Heart right ventricle (tissue), 16 donors: ENCODE measurements at regions of chr2 and their contacts with region 1.

Region 1: GRCh38 chr2:241355983-241356870 is at the start of gene FARP2:
- DNase-seq: peak; percentile 99 to 100
- ATAC-seq: peak; percentile 92 to 97 (median 94)
- H3K4me3 ChIP-seq: peak within 1 kb of the TSS; percentile 73 to 95 (median 86)
- H3K27ac ChIP-seq: peak within 1 kb of the TSS; percentile 67 to 92 (median 90)
- H3K4me1 ChIP-seq: peaks cover 2 to 38% (median 20%) of the 10 kb centered on the region in 9 donors
- H3K27me3 ChIP-seq: no peaks in the 10 kb centered on the region
- CTCF ChIP-seq: peak in 3 of 9 donors; percentile 4 to 20 (median 18)
- total RNA-seq, gene FARP2: 14.4 to 23.6 (median 19.4) TPM

Region 2: DNA sequence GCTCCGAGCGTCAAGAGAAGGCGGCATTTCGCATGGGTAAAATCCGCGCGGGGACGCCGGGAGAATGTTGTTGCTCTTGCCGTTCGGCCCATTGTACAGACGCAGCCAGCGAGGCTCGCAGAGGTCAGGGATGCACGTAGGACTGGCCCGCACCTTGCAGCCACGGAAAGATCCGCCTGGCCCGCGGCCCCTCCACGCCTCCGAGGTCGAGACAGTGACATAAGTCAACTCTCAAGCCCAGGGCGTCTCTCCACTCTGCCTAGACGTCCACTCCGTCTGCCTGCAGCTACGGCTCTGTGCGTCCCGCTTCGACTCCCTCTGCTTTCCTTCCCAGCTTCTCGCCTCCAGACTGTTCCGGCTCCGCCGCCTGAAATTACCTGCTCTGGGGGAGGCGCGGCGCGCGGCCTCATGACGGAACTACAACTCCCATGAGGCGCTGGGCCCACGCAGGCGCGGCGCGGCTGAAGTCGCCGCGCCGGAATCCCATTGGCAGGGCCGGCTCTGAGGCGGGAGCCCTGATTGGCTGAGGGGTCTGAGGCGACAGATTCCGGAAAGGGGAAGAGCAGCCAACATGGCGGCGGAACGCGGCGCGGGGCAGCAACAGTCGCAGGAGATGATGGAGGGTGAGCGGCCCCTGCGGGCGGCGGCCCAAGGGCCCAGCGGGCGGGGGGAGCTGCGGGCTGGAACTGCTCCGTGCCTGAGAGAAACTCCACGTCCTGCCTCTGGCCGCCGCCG is 206.1 kb before region 1 on chr2 and contains the start of gene PPP1R7:
- intact Hi-C with region 1: no loop called
- DNase-seq: peak; percentile 94 to 95
- ATAC-seq: peak; percentile 96 to 99 (median 98)
- H3K4me3 ChIP-seq: peak within 1 kb of the TSS; percentile 63 to 100 (median 95)
- H3K27ac ChIP-seq: peak within 1 kb of the TSS in 9 of 10 donors; percentile 70 to 94 (median 89)
- H3K4me1 ChIP-seq: peaks cover 2 to 24% (median 20%) of the 10 kb centered on the region in 9 donors
- H3K27me3 ChIP-seq: no peaks in the 10 kb centered on the region
- CTCF ChIP-seq: peak in 4 of 9 donors; percentile 24 to 39 (median 34)
- total RNA-seq, gene PPP1R7: 64.1 to 91.3 (median 78.3) TPM

Region 3: DNA sequence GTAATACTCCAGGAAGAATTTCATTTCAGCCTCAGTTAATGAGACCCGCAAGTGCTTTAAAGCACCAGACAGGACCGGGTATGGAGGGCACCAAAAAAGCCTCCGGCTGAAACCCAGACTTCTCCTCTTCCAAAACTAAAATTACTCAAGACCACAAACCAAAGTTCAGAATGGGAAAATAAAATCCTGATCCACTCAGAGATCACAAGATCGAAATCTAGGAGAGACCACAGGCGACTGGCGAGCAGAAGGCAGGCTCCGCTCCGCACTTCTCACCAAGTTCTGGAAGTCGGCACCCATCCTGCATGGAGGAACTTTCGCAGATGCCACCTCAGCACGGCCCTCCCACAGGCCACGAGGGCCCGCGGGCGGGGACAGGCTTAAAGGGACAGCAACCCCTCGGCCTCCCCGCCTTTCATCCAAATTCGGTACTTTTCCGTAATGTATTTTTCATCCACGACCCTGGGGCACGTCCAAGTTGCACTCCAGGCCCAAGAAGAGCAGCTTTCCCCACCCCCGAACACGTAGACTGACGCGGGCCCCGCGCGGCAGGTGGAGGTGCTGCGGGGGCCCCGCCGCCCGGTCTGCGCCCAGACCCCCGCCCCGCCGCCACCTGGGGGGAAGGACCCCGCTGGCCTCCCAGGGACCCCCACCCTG is 84.5 kb before region 1 on chr2:
- intact Hi-C with region 1: loop called in 1 of 10 experiments (anchors 5 kb)
- DNase-seq: peak; percentile 79 to 85
- ATAC-seq: peak; percentile 83 to 93 (median 90)
- H3K4me3 ChIP-seq: peak overlapping the region; percentile 81 to 96 (median 91)
- H3K27ac ChIP-seq: peak overlapping the region; percentile 63 to 96 (median 93)
- H3K4me1 ChIP-seq: peaks cover 6 to 48% (median 39%) of the 10 kb centered on the region in 9 donors
- H3K27me3 ChIP-seq: no peaks in the 10 kb centered on the region
- CTCF ChIP-seq: no peak

Region 4: DNA sequence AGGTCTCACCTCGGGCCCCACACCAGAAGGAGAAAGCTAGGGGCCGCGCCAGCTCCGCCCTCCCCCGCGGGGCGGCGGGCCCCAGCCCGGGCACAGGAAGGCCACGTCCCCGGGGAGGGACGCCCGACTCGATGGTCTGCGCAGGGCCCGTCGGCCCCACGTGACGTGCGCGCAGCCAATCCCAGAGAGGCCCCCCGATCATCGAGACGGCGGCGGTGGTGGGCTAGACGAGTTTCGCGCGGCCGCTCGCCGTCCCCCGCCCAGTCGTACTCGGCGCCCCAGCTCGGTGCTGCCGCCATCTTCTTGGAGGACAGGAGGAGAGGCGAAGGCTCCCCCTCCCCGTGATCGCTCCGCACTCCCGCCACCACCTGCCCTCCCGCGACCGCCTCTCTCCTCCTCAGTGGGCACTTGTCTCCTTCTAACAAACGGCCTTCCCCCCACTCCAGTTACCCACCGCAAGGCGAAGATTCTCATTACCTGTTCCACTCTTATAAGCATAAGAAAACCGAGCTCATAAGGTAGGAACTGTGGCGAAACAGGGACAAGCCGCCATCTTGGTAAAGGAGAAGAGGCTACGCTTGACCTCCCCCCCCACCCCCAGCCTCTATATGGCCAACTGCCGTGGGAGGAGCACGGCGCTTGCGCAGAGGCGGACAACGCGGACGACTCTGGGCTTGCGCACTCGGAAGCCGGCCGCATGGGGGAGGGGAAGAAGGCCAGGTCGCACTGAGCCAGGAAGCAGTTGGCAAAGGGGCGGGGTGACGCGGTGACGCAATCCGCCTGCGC is 40.9 kb before region 1 on chr2 and contains the start of gene HDLBP:
- intact Hi-C with region 1: loop called in 5 of 10 experiments (anchors 2 to 5 kb)
- DNase-seq: peak; percentile 100
- ATAC-seq: peak; percentile 90 to 97 (median 94)
- H3K4me3 ChIP-seq: peak within 1 kb of the TSS; percentile 68 to 93 (median 76)
- H3K27ac ChIP-seq: peak within 1 kb of the TSS; percentile 89 to 99 (median 96)
- H3K4me1 ChIP-seq: peaks cover 8 to 80% (median 61%) of the 10 kb centered on the region in 9 donors
- H3K27me3 ChIP-seq: no peaks in the 10 kb centered on the region
- CTCF ChIP-seq: peak in 6 of 9 donors; percentile 40 to 67 (median 52)
- total RNA-seq, gene HDLBP: 312 to 419 (median 357) TPM

Region 5: DNA sequence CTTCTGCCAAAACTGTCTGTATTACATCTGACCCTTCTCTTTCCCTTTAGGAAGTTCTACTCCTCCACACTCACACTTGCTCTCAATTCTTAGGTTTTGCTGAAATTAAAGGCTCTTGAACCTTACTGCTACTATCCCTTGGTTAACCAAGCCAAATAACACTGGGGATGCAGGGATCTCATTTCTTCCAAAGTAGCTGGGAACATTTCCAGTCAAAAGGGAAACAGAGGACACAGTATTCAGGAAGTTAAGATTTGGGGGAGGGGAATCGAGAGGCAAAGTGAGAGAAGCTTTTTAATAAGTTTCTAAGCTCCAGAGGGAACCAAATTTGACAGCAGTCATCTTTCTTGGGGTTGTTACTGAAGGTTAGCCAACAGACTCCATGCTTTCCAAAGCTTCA is 34.3 kb before region 1 on chr2:
- intact Hi-C with region 1: loop called in 5 of 10 experiments (anchors 1 to 5 kb)
- DNase-seq: no peak
- ATAC-seq: no peak
- H3K4me3 ChIP-seq: no peak overlapping the region
- H3K27ac ChIP-seq: peak overlapping the region in 2 of 10 donors; percentile 9 to 42
- H3K4me1 ChIP-seq: peaks cover 17 to 88% (median 85%) of the 10 kb centered on the region in 9 donors
- H3K27me3 ChIP-seq: no peaks in the 10 kb centered on the region
- CTCF ChIP-seq: no peak

Region 6: DNA sequence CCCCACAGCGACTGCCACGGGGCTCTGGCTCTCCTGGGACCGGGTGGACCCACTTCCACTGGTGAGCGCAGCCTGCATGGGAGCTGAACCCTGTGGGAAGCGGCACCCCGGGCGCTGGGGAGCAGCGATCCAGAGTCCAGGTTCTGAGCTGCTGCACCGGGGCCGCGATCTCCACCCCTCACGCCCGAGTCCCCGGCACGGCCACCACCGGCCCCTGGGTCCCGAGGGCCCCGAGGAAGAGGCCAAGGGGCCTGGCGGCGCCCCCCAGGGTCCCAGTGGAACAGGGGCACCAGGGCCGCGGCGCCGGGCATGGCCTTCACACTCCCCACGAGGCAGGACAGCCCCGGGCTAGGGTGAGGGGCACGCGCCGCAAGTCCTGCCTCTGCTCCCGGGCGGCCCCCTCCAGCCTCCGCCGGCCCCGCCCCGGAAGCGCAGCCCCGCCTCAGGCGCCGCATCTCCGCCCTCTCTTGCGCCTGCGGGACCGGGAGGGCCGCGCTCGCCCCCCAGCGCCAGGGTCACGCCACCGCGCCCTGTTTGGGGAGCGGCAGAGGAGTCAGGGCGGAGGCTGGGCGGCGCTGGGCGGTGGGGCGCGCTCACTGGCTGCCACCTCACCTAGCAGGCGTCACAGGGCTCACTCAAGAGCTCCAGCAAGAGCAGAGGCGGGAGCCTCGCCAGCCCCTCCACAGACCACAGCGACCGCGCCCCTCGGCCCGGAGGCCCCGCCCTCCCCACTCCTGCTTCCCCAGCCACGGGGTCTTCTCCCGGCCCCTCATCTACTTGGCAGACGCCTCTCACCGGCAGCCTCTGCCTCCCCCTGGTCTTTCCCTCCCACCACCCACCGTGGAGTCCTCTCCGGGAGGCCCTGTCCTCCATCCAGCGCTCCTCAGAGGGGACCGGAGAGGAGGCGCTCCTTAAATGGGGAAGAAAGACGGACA is 253.9 kb after region 1 on chr2:
- intact Hi-C with region 1: loop called in 1 of 10 experiments (anchors 10 kb)
- DNase-seq: peak; percentile 77 to 87
- ATAC-seq: peak; percentile 90 to 96 (median 94)
- H3K4me3 ChIP-seq: peak overlapping the region; percentile 46 to 76 (median 64)
- H3K27ac ChIP-seq: peak overlapping the region; percentile 5 to 82 (median 75)
- H3K4me1 ChIP-seq: peaks cover 3 to 33% (median 20%) of the 10 kb centered on the region in 9 donors
- H3K27me3 ChIP-seq: no peaks in the 10 kb centered on the region
- CTCF ChIP-seq: peak; percentile 59 to 83 (median 76)